ENCODE measurements at regions of chr6 and their contacts with region 1.

Region 1: GRCh38 chr6:49409951-49410542 is 53.0 kb downstream of the MMUT start:
- DNase-seq: peak; percentile 43
- H3K4me3 ChIP-seq: no peak overlapping the region
- H3K27ac ChIP-seq: no peak overlapping the region
- H3K27me3 ChIP-seq: no peaks in the 10 kb centered on the region
- CTCF ChIP-seq: peak; percentile 93

Region 2: GRCh38 chr6:47787620-47788497 is 1622.2 kb before region 1 on chr6:
- CTCF ChIA-PET with region 1: interaction called, 70 read pairs
- POLR2A ChIA-PET with region 1: no interaction called
- DNase-seq: peak; percentile 20
- H3K4me3 ChIP-seq: no peak overlapping the region
- H3K27ac ChIP-seq: no peak overlapping the region
- H3K27me3 ChIP-seq: peaks cover 3% of the 10 kb centered on the region
- CTCF ChIP-seq: peak; percentile 90

Region 3: DNA sequence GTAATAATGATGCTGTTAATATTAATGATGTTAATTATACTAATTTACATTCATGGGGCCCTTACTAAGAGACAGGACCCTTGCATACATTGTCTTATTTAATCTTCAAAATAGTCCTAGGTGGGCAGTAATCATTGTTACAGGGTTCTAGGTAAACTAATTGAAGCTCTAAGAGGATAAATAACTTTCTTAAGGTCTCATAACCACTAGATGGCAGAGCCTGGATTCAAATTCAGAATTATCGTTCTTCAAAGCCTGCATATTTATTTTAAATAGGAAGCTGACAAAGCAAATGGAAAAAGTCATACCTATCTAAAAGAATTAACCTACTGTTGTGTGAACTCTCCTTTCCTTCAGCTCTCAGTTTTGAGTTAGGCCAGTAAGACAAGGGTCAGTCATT is 1322.6 kb before region 1 on chr6:
- CTCF ChIA-PET with region 1: interaction called, 13 read pairs
- POLR2A ChIA-PET with region 1: no interaction called
- DNase-seq: no peak
- H3K4me3 ChIP-seq: no peak overlapping the region
- H3K27ac ChIP-seq: no peak overlapping the region
- H3K27me3 ChIP-seq: no peaks in the 10 kb centered on the region
- CTCF ChIP-seq: peak; percentile 39; the same call in 1 of the 2 replicates

Region 4: GRCh38 chr6:49030251-49031020 is 379.6 kb before region 1 on chr6:
- CTCF ChIA-PET with region 1: interaction called, 11 read pairs
- POLR2A ChIA-PET with region 1: no interaction called
- DNase-seq: no peak
- H3K4me3 ChIP-seq: no peak overlapping the region
- H3K27ac ChIP-seq: no peak overlapping the region
- H3K27me3 ChIP-seq: no peaks in the 10 kb centered on the region
- CTCF ChIP-seq: no peak

Region 5: GRCh38 chr6:49284180-49284579 is 125.9 kb before region 1 on chr6:
- CTCF ChIA-PET with region 1: no interaction called
- POLR2A ChIA-PET with region 1: no interaction called
- DNase-seq: no peak
- H3K4me3 ChIP-seq: no peak overlapping the region
- H3K27ac ChIP-seq: no peak overlapping the region
- H3K27me3 ChIP-seq: no peaks in the 10 kb centered on the region
- CTCF ChIP-seq: no peak

Region 6: DNA sequence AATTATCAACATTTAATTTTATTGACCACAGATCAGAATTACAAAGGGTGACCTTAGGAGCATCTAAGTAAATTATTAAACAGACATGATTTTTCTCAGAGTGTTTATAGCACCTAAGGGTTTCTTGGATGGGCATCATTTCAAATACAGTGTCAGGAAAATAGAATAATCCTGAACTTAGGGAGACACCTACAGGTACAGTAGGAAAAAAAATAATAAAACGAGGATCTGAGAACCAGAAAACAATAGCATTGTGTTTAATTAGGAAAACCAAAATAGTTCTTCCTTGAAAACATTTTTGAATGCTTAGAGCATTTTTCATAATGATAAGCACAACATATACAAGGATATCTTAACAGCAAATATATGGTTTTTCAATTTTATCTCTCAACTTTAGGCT is 13.8 kb after region 1 on chr6:
- CTCF ChIA-PET with region 1: interaction called, 21 read pairs
- POLR2A ChIA-PET with region 1: no interaction called
- DNase-seq: no peak
- H3K4me3 ChIP-seq: no peak overlapping the region
- H3K27ac ChIP-seq: no peak overlapping the region
- H3K27me3 ChIP-seq: no peaks in the 10 kb centered on the region
- CTCF ChIP-seq: no peak

Region 7: DNA sequence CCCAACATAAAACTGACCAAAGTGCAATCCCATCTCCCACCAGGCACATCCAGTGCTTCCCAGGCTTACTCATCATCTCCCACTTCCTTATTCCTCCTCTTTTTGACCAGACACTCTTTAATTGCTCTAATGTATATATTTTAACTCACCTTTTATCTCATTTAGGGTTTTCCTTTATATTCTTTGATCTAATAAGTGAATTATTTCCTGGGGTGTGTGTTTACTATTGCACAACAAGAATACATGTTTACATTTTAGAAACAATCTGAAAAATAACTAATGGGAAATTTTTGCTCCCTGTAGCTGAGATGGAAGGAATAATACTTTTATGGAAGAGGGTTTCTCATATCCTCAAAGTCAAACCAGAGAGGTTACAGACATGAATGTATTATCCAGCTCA is 208.2 kb after region 1 on chr6:
- CTCF ChIA-PET with region 1: no interaction called
- POLR2A ChIA-PET with region 1: no interaction called
- DNase-seq: no peak
- H3K4me3 ChIP-seq: no peak overlapping the region
- H3K27ac ChIP-seq: no peak overlapping the region
- H3K27me3 ChIP-seq: no peaks in the 10 kb centered on the region
- CTCF ChIP-seq: no peak